GM12878 (cell line): ENCODE measurements at regions of chr5 and their contacts with region 1.

Region 1: GRCh38 chr5:10627160-10627701 is 63.4 kb downstream of the ANKRD33B start:
- DNase-seq: no peak
- ATAC-seq: peak; percentile 12
- H3K4me3 ChIP-seq: peak overlapping the region; percentile 29
- H3K27ac ChIP-seq: peak overlapping the region; percentile 64
- H3K4me1 ChIP-seq: peaks cover 62% of the 10 kb centered on the region
- H3K27me3 ChIP-seq: no peaks in the 10 kb centered on the region
- CTCF ChIP-seq: no peak
- EP300 ChIP-seq: no peak
- POLR2A ChIP-seq: no peak
- RAD21 ChIP-seq: no peak

Region 2: GRCh38 chr5:10077791-10078545 is 549.3 kb before region 1 on chr5:
- CTCF ChIA-PET with region 1: no interaction called
- POLR2A ChIA-PET with region 1: no interaction called
- RAD21 ChIA-PET with region 1: no interaction called
- SMC1A ChIA-PET with region 1: no interaction called
- in situ Hi-C with region 1: no loop called
- intact Hi-C with region 1: no loop called
- DNase-seq: no peak
- ATAC-seq: no peak
- H3K4me3 ChIP-seq: no peak overlapping the region
- H3K27ac ChIP-seq: no peak overlapping the region
- H3K4me1 ChIP-seq: no peaks in the 10 kb centered on the region; the same call in 1 of the 2 replicates
- H3K27me3 ChIP-seq: no peaks in the 10 kb centered on the region
- CTCF ChIP-seq: no peak
- EP300 ChIP-seq: no peak
- POLR2A ChIP-seq: no peak
- RAD21 ChIP-seq: no peak

Region 3: GRCh38 chr5:10460252-10460906 is 166.9 kb before region 1 on chr5:
- CTCF ChIA-PET with region 1: interaction called, 229 read pairs
- POLR2A ChIA-PET with region 1: no interaction called
- RAD21 ChIA-PET with region 1: interaction called, 186 read pairs
- SMC1A ChIA-PET with region 1: interaction called, 168 read pairs
- in situ Hi-C with region 1: no loop called
- intact Hi-C with region 1: no loop called
- DNase-seq: no peak
- ATAC-seq: peak; percentile 50
- H3K4me3 ChIP-seq: no peak overlapping the region
- H3K27ac ChIP-seq: no peak overlapping the region
- H3K4me1 ChIP-seq: no peaks in the 10 kb centered on the region
- H3K27me3 ChIP-seq: no peaks in the 10 kb centered on the region; a peak in 2 of 4 replicates
- CTCF ChIP-seq: no peak
- EP300 ChIP-seq: no peak
- POLR2A ChIP-seq: no peak
- RAD21 ChIP-seq: no peak

Region 4: DNA sequence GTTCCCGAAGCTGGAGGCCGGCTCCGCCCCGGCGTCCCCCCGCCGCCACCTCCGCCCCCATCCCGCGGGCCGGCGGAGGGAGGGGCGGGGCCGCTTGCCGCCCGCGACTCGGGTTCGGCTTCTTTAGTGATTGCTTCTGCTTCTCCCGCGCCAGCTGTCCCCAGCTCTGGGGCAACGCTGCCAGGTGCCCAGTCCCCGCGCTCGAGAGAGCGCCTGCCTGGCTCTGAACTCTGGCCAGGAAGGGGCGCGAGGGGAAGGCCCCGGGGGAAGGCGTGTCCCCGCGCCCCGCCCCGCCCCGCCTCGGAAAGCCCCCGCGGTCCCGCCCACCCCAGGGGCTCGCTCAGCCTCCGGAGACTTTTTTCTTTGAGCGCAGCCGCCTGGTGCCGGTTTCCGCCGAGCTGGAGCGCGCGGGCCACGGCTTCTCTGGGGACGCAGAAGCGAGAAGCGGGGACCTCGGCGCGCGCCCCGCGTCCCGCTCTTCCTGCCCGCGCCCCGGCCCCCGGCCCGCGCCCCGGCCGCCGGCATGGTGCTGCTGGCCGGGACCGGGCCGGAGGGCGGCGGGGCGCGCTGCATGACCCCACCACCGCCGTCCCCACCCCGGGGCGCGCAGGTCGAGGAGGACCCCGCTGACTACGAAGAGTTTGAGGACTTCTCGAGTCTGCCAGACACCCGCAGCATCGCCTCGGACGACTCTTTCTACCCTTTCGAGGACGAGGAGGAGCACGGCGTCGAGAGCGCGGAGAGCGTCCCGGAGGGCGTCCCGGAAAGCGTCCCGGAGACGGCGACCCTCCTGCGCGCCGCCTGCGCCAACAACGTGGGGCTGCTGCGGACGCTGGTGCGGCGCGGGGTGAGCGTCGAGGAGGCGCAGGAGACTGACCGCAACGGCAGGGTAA is 63.0 kb before region 1 on chr5 and contains the start of gene ANKRD33B:
- CTCF ChIA-PET with region 1: interaction called, 62 read pairs
- POLR2A ChIA-PET with region 1: interaction called, 16 read pairs
- RAD21 ChIA-PET with region 1: interaction called, 51 read pairs
- SMC1A ChIA-PET with region 1: interaction called, 71 read pairs
- in situ Hi-C with region 1: no loop called
- intact Hi-C with region 1: loop called (anchors 1 kb)
- DNase-seq: no peak
- ATAC-seq: peak; percentile 64
- H3K4me3 ChIP-seq: peak within 1 kb of the TSS; percentile 87
- H3K27ac ChIP-seq: peak within 1 kb of the TSS; percentile 87
- H3K4me1 ChIP-seq: peaks cover 19% of the 10 kb centered on the region
- H3K27me3 ChIP-seq: no peaks in the 10 kb centered on the region
- CTCF ChIP-seq: no peak
- EP300 ChIP-seq: no peak
- POLR2A ChIP-seq: peak; percentile 93
- RAD21 ChIP-seq: peak; percentile 16; the same call in 1 of the 2 replicates
- polyA plus RNA-seq, gene ANKRD33B: 5.9 to 6.1 TPM

Region 5: DNA sequence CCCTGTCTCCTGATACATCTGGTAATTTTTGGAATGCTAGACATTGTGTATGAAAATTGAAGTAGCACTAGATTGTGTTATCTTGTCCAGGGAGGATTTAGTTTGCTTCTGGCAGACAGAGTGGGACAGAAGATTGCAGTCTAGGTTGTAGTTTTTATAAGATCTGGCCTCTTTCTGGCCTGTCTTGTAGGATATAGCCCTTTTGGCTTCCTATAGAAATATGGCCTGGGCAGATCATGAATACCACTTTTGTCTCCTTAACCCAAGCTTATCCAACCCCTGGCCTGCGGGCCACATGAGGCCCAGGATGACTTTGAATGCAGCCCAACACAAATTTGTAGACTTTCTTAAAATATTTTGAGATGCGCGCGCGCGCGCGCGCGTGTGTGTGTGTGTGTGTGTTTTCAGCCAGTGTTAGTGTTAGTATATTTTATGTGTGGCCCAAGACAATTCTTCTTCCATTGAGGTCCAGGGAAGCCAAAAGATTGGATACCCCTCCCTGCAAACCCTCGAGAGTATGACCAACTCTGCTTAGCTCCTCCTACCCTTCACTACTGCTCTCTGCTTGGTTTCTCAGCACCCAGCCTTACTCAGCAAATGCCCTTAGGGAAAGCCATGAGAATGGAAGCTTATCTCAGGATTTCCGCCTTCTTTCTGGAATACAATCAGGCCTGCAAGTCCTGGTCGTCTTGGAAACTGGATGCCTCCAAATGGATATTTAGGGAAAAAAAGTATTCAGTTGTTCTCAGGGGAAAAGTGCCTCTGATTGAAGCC is 36.8 kb before region 1 on chr5:
- CTCF ChIA-PET with region 1: interaction called, 22 read pairs
- POLR2A ChIA-PET with region 1: interaction called, 4 read pairs
- RAD21 ChIA-PET with region 1: interaction called, 19 read pairs
- SMC1A ChIA-PET with region 1: interaction called, 16 read pairs
- in situ Hi-C with region 1: no loop called
- intact Hi-C with region 1: no loop called
- DNase-seq: no peak
- ATAC-seq: peak; percentile 27; the same call in 2 of the 3 replicates
- H3K4me3 ChIP-seq: no peak overlapping the region
- H3K27ac ChIP-seq: peak overlapping the region; percentile 28
- H3K4me1 ChIP-seq: peaks cover 79% of the 10 kb centered on the region
- H3K27me3 ChIP-seq: no peaks in the 10 kb centered on the region
- CTCF ChIP-seq: no peak
- EP300 ChIP-seq: no peak
- POLR2A ChIP-seq: no peak
- RAD21 ChIP-seq: no peak

Region 6: GRCh38 chr5:10668697-10669096 is 41.5 kb after region 1 on chr5:
- CTCF ChIA-PET with region 1: no interaction called
- POLR2A ChIA-PET with region 1: no interaction called
- RAD21 ChIA-PET with region 1: no interaction called
- SMC1A ChIA-PET with region 1: no interaction called
- in situ Hi-C with region 1: no loop called
- intact Hi-C with region 1: no loop called
- DNase-seq: no peak
- ATAC-seq: no peak
- H3K4me3 ChIP-seq: no peak overlapping the region
- H3K27ac ChIP-seq: no peak overlapping the region
- H3K4me1 ChIP-seq: no peaks in the 10 kb centered on the region
- H3K27me3 ChIP-seq: no peaks in the 10 kb centered on the region
- CTCF ChIP-seq: no peak
- EP300 ChIP-seq: no peak
- POLR2A ChIP-seq: no peak
- RAD21 ChIP-seq: no peak

Region 7: GRCh38 chr5:10684303-10685086 is 57.3 kb after region 1 on chr5:
- CTCF ChIA-PET with region 1: interaction called, 50 read pairs
- POLR2A ChIA-PET with region 1: interaction called, 39 read pairs
- RAD21 ChIA-PET with region 1: interaction called, 93 read pairs
- SMC1A ChIA-PET with region 1: interaction called, 90 read pairs
- in situ Hi-C with region 1: no loop called
- intact Hi-C with region 1: no loop called
- DNase-seq: no peak
- ATAC-seq: peak; percentile 76
- H3K4me3 ChIP-seq: 0 out of 2 replicates have a peak overlapping the region, but pooled peaks have one; percentile 17
- H3K27ac ChIP-seq: peak overlapping the region; percentile 88
- H3K4me1 ChIP-seq: peaks cover 23% of the 10 kb centered on the region
- H3K27me3 ChIP-seq: no peaks in the 10 kb centered on the region
- CTCF ChIP-seq: no peak
- EP300 ChIP-seq: no peak
- POLR2A ChIP-seq: no peak
- RAD21 ChIP-seq: no peak